Activated CD8-positive, alpha-beta memory T cell treated with anti-CD3 and anti-CD28 coated beads, Interleukin-2, amount 10 ng/mL, durations not matched to agents 7 days and 5 days (primary cell): ENCODE measurements at regions of chr1 and their contacts with region 1.

Region 1: GRCh38 chr1:116485071-116485735 is 85.6 kb downstream of the CD58 start:
- DNase-seq: peak; percentile 90
- ATAC-seq: peak; percentile 93
- H3K4me3 Mint-ChIP-seq: no peak overlapping the region
- H3K27ac Mint-ChIP-seq: no peak overlapping the region
- H3K4me1 Mint-ChIP-seq: peaks cover 9% of the 10 kb centered on the region
- H3K27me3 Mint-ChIP-seq: no peaks in the 10 kb centered on the region

Region 2: DNA sequence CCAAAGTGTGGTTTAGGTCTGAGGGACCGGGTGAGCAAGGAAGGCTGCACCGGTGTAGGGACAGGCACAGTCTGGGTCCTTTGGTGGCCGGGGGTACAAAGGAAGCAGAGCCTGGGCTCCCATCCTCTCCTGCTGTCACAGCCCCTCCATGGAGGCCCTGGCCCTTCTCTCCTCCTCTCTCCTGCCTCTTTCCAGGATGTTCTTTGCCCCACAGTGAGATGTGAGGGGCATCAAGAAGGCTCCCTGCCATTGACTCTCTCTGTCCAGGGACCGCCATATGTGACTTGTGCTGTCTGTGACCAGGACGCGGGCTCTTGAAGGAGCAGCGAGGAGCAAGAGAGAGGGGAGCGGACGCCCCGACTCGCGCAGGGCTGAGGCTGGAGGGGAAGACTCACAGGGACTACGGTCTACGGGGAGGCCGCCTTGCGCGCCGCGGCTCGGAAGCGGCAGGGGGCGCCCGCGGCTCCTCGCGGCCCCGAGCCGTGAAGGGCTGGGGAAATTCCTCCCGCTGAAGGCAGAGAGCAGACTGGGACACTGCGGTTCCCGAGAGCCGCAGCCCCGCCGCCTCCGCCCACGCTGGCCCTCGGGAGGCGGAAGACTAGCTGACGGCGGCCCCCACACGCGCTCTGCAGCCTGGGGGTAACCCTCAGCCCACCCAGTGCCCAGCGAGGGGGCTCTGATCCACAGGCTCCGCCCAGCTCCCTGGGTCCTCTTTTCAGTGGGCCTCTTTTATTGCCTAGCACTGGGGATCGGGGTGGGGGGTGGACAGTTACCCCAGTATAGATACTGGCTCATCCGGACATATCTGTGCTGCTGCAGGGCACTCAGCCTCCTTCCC is 333.2 kb before region 1 on chr1:
- CTCF ChIA-PET with region 1: interaction called, 84 read pairs
- DNase-seq: peak; percentile 78
- ATAC-seq: peak; percentile 98
- H3K4me3 Mint-ChIP-seq: peak overlapping the region; percentile 32
- H3K27ac Mint-ChIP-seq: no peak overlapping the region
- H3K4me1 Mint-ChIP-seq: peaks cover 7% of the 10 kb centered on the region
- H3K27me3 Mint-ChIP-seq: peaks cover 14% of the 10 kb centered on the region

Region 3: GRCh38 chr1:116268204-116268603 is 217.0 kb before region 1 on chr1:
- CTCF ChIA-PET with region 1: no interaction called
- DNase-seq: no peak
- ATAC-seq: no peak
- H3K4me3 Mint-ChIP-seq: no peak overlapping the region
- H3K27ac Mint-ChIP-seq: no peak overlapping the region
- H3K4me1 Mint-ChIP-seq: no peaks in the 10 kb centered on the region
- H3K27me3 Mint-ChIP-seq: peaks cover 2% of the 10 kb centered on the region

Region 4: DNA sequence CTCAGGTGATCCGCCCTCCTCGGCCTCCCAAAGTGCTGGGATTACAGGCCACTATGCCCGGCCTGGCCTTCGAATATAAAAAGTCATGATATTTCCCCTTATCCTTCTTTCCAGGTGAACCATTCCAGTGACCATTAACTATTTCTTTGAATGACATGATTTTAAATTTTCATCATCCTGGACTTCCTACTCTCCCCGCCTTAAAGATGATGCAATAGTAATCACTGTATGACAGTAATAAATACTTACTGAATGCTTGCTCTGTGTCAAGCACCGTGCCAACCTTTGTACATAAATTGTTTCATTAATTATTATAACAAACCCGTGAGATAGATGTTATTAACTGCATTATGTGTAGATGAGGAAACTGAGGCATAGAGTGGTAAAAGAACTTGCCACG is 132.0 kb before region 1 on chr1:
- CTCF ChIA-PET with region 1: interaction called, 35 read pairs
- DNase-seq: no peak
- ATAC-seq: no peak
- H3K4me3 Mint-ChIP-seq: no peak overlapping the region
- H3K27ac Mint-ChIP-seq: no peak overlapping the region
- H3K4me1 Mint-ChIP-seq: peaks cover 16% of the 10 kb centered on the region
- H3K27me3 Mint-ChIP-seq: no peaks in the 10 kb centered on the region

Region 5: DNA sequence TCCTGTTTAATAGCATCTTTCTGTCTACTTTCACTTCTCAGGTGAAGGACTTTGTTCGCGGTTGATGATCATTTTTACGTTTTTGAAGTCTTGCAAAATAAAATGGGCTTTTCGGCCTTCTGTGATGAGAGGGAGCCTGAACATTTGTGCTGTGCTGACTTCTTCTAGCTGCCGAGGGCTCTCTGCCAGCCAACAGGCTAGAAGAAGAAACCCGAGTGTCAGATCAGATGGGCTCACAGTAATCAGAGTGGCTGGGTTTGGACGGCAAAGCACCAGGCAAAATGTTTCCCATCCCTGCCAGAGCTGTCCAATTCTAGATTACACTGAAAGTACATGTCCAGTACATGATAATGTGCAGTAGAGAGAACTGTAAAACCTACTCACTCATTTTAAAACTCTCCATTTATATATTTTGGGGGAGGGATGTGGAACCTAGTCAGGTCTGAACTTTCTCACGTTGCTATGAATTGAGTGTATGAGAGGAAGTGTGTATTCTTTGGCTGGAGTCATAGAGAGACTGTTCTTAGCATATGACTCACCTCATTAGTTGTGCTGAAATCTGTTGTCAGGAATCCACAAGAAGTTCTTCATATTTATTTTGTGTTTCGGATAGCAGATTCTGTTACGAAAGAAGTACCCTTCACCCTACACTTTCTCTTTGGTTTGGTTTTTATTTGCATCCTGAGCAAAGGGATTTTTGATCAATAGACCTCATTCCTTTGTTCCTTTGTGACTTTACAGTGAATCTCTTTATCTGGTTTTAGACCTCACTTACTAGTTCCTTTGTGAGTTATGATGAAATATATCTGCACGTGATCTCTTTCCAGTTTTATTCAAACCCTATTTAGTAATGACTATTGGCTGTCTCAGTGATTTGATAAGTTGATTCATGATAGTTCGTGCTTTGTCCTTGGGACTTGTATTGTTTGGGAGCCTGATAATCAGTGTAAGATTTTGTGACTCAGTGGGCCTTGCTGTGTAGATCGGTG is 107.4 kb before region 1 on chr1:
- CTCF ChIA-PET with region 1: interaction called, 11 read pairs
- DNase-seq: peak; percentile 67
- ATAC-seq: peak; percentile 66
- H3K4me3 Mint-ChIP-seq: peak overlapping the region; percentile 80
- H3K27ac Mint-ChIP-seq: peak overlapping the region; percentile 92
- H3K4me1 Mint-ChIP-seq: peaks cover 64% of the 10 kb centered on the region
- H3K27me3 Mint-ChIP-seq: no peaks in the 10 kb centered on the region

Region 6: DNA sequence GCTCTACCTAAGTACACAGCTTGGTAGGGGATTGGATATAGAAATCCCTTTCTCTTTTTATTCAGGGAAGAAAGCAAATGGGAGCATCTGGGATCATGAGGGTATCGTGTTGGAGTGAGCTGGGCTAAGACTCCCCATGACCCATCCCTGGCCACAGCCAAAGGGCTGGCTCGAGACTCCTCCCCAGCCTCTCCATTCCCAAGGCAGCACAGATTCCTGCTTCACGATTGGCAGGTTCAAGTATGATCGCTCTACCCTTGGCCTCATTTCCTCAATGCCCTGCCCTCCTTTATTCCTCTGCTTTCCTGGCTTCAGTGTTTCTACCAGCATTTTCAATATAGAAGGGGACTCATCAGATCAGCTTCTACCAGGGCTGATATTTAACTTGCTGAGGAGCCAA is 22.5 kb before region 1 on chr1:
- CTCF ChIA-PET with region 1: interaction called, 10 read pairs
- DNase-seq: no peak
- ATAC-seq: no peak
- H3K4me3 Mint-ChIP-seq: no peak overlapping the region
- H3K27ac Mint-ChIP-seq: no peak overlapping the region
- H3K4me1 Mint-ChIP-seq: no peaks in the 10 kb centered on the region
- H3K27me3 Mint-ChIP-seq: peaks cover 8% of the 10 kb centered on the region

Region 7: GRCh38 chr1:116498789-116499628 is 13.8 kb after region 1 on chr1:
- CTCF ChIA-PET with region 1: interaction called, 69 read pairs
- DNase-seq: peak; percentile 70
- ATAC-seq: peak; percentile 73
- H3K4me3 Mint-ChIP-seq: no peak overlapping the region
- H3K27ac Mint-ChIP-seq: no peak overlapping the region
- H3K4me1 Mint-ChIP-seq: peaks cover 44% of the 10 kb centered on the region
- H3K27me3 Mint-ChIP-seq: no peaks in the 10 kb centered on the region

Region 8: DNA sequence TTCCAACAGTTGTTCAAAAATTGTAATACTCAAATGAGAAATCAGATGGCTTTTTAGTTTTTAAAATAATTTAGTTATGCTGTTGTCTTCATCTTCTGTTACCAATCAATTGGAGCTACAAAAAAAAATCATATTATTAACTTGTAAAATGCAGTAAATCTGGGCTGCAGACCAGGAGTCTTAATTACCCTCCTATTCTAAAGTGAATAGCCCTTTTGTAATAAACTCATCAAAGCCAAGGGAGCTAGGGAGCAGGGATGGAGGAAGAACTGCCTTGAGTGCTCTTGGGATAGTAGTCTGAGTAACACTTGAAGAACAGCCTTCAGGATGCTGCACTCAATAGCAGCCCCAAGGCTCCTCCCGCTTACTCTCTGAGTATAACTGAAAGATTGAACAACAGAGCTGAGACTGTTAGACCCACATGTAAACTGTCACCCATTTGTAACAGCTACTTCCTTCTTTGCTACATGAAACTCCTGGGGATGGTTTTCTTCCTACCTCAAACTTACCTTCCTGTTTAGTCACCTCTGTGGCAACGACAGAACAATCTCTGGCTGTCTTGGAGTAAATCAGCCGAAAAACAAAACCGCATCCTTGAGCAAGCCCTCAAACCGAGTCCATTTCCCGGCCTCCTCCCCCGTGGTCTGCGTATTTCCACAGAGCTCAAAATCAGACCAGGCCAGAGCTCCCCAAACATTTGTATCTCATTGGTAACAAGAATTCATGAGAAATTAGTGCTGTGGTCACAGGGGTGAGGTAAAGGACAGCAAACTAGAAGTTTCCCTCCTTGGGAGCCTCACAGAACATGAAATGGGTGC is 29.7 kb after region 1 on chr1:
- CTCF ChIA-PET with region 1: interaction called, 10 read pairs
- DNase-seq: peak; percentile 86
- ATAC-seq: peak; percentile 83
- H3K4me3 Mint-ChIP-seq: peak overlapping the region; percentile 39
- H3K27ac Mint-ChIP-seq: peak overlapping the region; percentile 93
- H3K4me1 Mint-ChIP-seq: peaks cover 77% of the 10 kb centered on the region
- H3K27me3 Mint-ChIP-seq: no peaks in the 10 kb centered on the region